AG04449 (cell line): ENCODE measurements at regions of chr2 and their contacts with region 1.

Region 1: DNA sequence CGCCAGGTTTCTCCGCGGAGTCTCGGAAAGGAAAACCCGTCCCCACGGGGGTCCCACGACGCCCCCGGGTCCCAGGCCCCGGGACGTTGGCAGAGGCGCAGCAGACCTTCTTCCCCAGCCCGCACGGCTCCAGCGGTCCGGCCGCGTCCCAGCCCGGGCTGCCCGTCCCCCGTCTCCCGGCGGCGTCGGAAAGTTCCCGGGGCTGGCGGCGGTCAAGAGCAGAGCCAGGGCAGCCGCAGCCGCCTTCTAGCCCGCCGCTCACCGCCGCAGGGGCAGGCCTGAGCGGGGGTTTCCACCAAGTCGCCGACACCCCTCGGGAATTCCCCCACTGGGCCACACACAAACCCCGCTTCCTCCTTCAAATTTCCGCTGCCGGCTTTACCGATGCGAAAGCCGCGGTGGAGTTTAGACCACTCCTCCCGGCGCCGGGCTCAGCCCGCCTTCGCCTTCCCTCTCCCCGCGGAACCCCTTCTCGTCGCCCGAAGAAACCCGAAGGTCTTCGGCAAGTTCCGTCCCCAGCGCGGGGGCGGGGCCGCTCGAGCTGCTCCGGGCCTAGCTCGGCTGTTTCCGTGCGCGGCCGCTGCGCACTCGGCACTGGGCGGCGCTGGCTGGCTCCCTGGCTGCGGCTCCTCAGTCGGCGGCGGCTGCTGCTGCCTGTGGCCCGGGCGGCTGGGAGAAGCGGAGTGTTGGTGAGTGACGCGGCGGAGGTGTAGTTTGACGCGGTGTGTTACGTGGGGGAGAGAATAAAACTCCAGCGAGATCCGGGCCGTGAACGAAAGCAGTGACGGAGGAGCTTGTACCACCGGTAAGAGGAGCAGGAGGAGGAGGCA is at the start of gene CREB1:
- DNase-seq: peak; percentile 92
- H3K4me3 ChIP-seq: peak within 1 kb of the TSS; percentile 97
- CTCF ChIP-seq: peak; percentile 29

Region 2: DNA sequence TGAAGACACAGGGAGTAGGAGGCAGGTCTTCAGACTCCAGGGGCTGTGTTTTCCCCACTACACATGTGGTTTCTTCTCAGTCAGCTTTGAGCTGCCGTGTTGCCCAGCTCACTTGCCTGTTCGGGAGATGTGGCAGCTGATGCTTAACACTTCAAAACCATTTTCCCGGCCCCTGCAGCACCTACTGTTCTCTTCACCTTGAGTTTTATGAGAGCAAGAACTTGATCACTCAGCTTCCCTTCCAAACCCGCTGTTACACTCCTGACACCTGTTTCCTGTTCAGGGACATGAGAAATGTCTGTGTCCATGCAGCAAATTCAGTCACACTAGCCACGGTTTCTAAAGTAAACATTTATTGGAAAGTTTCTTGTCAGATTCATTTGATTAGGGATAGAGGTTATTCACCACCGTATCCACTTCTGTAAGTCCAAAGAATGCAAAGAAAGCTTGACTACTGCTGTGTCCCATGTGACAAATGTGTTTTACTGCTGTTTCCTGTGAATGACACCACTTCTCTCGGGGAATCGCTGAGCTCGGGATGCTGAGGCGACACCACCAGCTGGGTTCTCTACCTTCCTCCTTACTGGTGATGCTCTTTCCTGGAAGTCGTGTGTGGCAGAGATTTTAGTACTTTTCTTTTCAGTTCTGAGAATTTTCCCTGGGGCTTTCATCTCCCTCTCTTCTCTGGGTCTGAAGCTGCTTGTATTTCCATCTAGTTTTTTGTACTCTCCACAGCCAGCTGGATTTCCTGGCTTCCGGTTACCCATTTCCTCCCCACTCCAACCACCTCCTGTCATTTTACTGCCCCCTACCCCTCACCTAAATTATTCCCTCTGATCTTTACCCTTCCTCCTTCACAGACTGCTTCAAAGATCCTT is 455.5 kb before region 1 on chr2:
- CTCF ChIA-PET with region 1: no interaction called
- POLR2A ChIA-PET with region 1: no interaction called
- DNase-seq: no peak
- H3K4me3 ChIP-seq: no peak overlapping the region
- CTCF ChIP-seq: no peak

Region 3: DNA sequence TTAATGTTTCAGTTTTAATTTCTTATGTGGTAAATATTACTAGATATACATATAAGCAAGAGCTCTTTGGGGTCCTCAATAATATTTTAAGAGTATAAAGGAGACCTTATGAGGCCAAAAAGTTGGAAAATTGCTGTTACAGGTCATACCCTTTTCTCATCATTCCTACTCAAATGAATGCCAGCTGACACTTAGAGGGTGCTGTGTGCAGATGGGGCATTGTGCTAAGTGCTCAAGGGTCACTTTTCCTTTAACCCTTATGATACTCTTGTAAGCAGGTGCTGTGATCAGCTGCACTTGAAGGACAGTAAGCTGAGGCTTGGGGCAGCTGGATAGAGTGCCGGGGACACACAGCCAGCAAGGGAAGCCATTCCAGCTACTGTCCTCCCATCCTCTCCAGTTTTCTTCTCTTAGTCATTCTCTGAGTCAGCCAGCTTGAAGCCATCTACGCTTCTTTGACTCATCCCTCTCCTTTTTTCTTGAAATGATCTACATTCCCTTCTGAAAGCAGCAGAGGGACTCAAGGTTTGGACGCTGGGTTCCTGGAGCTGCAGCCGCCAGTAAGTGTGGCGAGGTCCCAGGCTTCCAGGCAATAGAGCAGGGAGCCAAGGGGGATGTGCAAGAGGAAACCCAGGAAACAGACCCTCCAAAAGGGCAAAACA is 41.8 kb before region 1 on chr2:
- CTCF ChIA-PET with region 1: interaction called, 3 read pairs
- POLR2A ChIA-PET with region 1: interaction called, 10 read pairs
- DNase-seq: peak; percentile 75
- H3K4me3 ChIP-seq: no peak overlapping the region
- CTCF ChIP-seq: peak; percentile 48

Region 4: DNA sequence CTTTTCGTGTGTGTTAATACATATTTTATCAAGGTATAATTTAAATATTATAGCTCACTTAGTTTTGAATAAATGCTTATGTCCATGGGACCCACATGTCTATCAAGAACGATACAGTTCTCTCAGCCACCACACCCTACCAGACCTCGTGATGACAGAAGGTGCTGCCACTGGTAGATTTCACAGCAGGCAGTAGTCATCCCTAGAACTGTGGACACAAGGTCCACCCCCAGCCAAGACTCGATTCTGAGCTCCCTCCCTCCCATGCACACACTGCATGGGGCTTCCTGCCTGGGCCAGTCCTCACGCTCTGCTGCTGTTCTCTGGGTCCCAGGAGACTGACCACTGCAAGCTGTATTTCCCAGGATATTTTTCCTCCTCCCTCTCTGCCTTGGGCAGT is 26.3 kb before region 1 on chr2:
- CTCF ChIA-PET with region 1: interaction called, 6 read pairs
- POLR2A ChIA-PET with region 1: interaction called, 14 read pairs
- DNase-seq: no peak
- H3K4me3 ChIP-seq: no peak overlapping the region
- CTCF ChIP-seq: no peak

Region 5: DNA sequence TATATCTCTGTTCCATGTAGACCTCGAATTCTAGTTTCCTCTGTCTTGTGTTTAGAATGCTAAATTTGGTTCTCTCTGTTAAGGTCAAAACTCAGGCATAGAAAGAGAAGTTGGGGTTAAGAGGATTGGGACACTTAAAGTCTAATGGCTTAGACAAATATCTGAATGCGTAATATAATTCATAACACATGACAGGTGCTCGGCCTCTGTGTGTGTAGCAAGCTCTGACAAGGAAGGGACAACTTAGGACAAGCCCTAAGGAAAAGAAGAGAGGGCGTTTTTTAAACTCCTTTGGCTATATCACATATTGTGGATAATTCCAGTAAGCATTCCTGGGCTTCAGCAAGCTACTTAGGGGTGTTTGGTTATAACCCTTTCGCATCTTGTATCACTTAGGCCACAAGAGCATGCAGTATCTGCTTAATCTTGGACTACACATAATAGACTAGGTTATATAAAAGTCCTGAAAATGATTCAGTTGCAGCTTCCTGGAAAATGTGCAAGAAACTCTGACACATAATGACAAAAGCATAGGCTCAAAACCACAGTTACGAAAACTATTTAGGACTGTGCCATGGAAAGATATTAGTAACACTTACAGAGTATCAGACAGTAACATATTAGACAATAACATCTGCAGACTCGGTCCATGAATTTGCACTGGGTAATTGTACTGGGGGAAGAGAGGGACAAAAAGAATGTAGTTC is 15.8 kb before region 1 on chr2:
- CTCF ChIA-PET with region 1: interaction called, 5 read pairs
- POLR2A ChIA-PET with region 1: interaction called, 18 read pairs
- DNase-seq: peak; percentile 99
- H3K4me3 ChIP-seq: no peak overlapping the region
- CTCF ChIP-seq: no peak

Region 6: GRCh38 chr2:207625018-207625907 is 95.7 kb after region 1 on chr2 and contains the start of gene METTL21A:
- CTCF ChIA-PET with region 1: no interaction called
- POLR2A ChIA-PET with region 1: interaction called, 14 read pairs
- DNase-seq: no peak
- H3K4me3 ChIP-seq: peak within 1 kb of the TSS; percentile 74
- CTCF ChIP-seq: peak; percentile 68